ENCODE measurements at regions of chr7 and their contacts with region 1.

Region 1: GRCh38 chr7:128425850-128426249 is 16.1 kb upstream of the IMPDH1 start:
- DNase-seq: peak; percentile 88 to 94 (median 92)
- ATAC-seq: peak; percentile 88
- H3K4me3 ChIP-seq: no peak overlapping the region
- H3K27ac ChIP-seq: no peak overlapping the region
- H3K4me1 ChIP-seq: peaks cover 5 to 9% of the 10 kb centered on the region in 2 experiments; a peak in 3 of 5 replicates
- H3K27me3 ChIP-seq: peaks cover 4 to 12% of the 10 kb centered on the region in 2 experiments; a peak in 2 of 5 replicates
- CTCF ChIP-seq: peak; percentile 96 to 99 (median 99)
- EP300 ChIP-seq: no peak
- POLR2A ChIP-seq: no peak
- RAD21 ChIP-seq: peak; percentile 99

Region 2: GRCh38 chr7:128398016-128398840 is 27.6 kb before region 1 on chr7:
- CTCF ChIA-PET with region 1: interaction called, 134 read pairs
- POLR2A ChIA-PET with region 1: interaction called, 5 read pairs
- in situ Hi-C with region 1: no loop called
- intact Hi-C with region 1: loop called (anchors 1 kb)
- DNase-seq: peak; percentile 73 to 79 (median 75)
- ATAC-seq: peak; percentile 86
- H3K4me3 ChIP-seq: no peak overlapping the region
- H3K27ac ChIP-seq: no peak overlapping the region
- H3K4me1 ChIP-seq: peaks cover 0 to 12% of the 10 kb centered on the region in 2 experiments; a peak in 2 of 5 replicates
- H3K27me3 ChIP-seq: no peaks in the 10 kb centered on the region
- CTCF ChIP-seq: peak; percentile 95 to 99 (median 98)
- EP300 ChIP-seq: 0 out of 2 replicates have a peak, but pooled peaks have one; percentile 13
- POLR2A ChIP-seq: 0 out of 2 replicates have a peak, but pooled peaks have one; percentile 19
- RAD21 ChIP-seq: peak; percentile 93 to 98

Region 3: GRCh38 chr7:128415217-128415785 is 10.5 kb before region 1 on chr7:
- CTCF ChIA-PET with region 1: interaction called, 3 read pairs
- POLR2A ChIA-PET with region 1: interaction called, 10 read pairs
- in situ Hi-C with region 1: no loop called
- intact Hi-C with region 1: no loop called
- DNase-seq: no peak
- ATAC-seq: no peak
- H3K4me3 ChIP-seq: no peak overlapping the region
- H3K27ac ChIP-seq: no peak overlapping the region
- H3K4me1 ChIP-seq: peaks cover 4 to 5% of the 10 kb centered on the region in 2 experiments; a peak in 3 of 5 replicates
- H3K27me3 ChIP-seq: peaks cover 10 to 18% of the 10 kb centered on the region in 2 experiments; a peak in 4 of 5 replicates
- CTCF ChIP-seq: no peak
- EP300 ChIP-seq: no peak
- POLR2A ChIP-seq: no peak
- RAD21 ChIP-seq: no peak

Region 4: DNA sequence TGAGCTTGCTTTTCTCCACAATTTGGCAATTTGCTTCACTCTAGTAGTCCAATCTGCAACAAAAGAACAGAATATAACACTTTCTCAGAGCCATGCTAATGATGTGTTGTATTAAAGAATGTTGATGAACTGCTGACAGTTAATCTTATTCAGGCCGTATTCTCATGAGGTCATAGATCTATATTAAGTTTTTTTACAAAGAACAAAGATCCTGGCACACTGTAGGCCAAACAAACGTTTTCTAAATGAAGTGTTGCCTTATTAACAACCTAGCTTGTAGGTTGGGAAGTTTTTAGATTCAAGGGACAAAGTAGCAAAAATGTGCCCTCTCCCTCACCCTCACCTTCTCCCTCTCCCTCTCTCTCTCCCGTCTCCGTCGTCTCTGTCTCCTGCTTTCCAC is 36.6 kb after region 1 on chr7:
- CTCF ChIA-PET with region 1: interaction called, 173 read pairs
- POLR2A ChIA-PET with region 1: interaction called, 5 read pairs
- in situ Hi-C with region 1: loop called (anchors 5 kb)
- intact Hi-C with region 1: loop called (anchors 1 kb)
- DNase-seq: no peak
- ATAC-seq: no peak
- H3K4me3 ChIP-seq: no peak overlapping the region
- H3K27ac ChIP-seq: no peak overlapping the region
- H3K4me1 ChIP-seq: peaks cover 11 to 12% of the 10 kb centered on the region in 2 experiments; a peak in 4 of 5 replicates
- H3K27me3 ChIP-seq: no peaks in the 10 kb centered on the region
- CTCF ChIP-seq: no peak
- EP300 ChIP-seq: no peak
- POLR2A ChIP-seq: no peak
- RAD21 ChIP-seq: no peak

Region 5: GRCh38 chr7:128550920-128551319 is 125.1 kb after region 1 on chr7:
- CTCF ChIA-PET with region 1: no interaction called
- POLR2A ChIA-PET with region 1: no interaction called
- in situ Hi-C with region 1: no loop called
- intact Hi-C with region 1: no loop called
- DNase-seq: no peak
- ATAC-seq: peak; percentile 13; the same call in 2 of the 3 replicates
- H3K4me3 ChIP-seq: no peak overlapping the region
- H3K27ac ChIP-seq: no peak overlapping the region
- H3K4me1 ChIP-seq: no peaks in the 10 kb centered on the region
- H3K27me3 ChIP-seq: no peaks in the 10 kb centered on the region
- CTCF ChIP-seq: no peak
- EP300 ChIP-seq: no peak
- POLR2A ChIP-seq: no peak
- RAD21 ChIP-seq: no peak

Region 6: DNA sequence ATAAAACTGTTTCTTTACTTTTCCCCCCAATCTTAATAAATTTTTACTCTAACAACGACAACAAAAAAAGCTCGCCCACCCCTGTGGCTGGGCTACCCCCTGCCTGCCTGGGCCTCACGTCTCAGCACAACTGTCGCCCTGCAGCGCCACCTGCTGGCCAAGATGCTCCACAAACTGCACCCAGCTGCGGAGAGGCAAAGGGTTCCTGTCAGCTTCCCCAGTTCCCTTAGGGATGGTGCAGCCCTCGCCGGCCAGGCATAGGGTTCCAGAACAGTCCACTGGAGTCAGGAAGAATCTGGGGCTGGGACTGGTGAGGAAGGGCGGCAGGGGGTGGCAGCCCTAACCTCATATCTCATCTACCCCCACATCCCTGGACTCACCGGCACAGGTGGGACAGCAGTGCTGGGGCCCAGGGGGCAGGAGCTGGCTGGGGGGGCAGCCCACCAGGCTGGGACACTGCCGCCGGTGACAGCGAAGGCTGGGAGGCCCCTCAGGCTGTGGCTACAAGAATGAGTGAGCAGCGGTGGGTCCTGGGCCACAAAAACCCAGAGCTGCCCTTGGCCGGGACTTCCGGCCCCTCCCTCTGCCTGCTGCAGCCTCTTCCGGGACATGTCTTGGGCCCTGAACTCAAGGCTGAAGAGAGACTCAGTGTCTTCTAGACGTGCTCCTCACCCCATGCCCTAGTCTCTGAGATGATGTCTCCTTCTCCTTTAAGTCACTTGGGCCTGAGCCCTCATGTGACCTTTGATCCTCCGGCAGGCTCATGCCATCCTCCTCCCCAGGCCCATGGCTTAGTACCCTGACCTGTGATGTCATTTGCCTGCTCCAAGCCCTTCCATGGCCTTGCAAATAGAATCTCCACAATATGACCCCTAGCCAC is 458.0 kb after region 1 on chr7:
- CTCF ChIA-PET with region 1: interaction called, 50 read pairs
- POLR2A ChIA-PET with region 1: interaction called, 3 read pairs
- in situ Hi-C with region 1: no loop called
- intact Hi-C with region 1: loop called (anchors 1 kb)
- DNase-seq: peak; percentile 92 to 97 (median 96)
- ATAC-seq: peak; percentile 79
- H3K4me3 ChIP-seq: no peak overlapping the region
- H3K27ac ChIP-seq: no peak overlapping the region
- H3K4me1 ChIP-seq: peaks cover 0 to 54% of the 10 kb centered on the region in 2 experiments; a peak in 3 of 5 replicates
- H3K27me3 ChIP-seq: peaks cover 2 to 19% of the 10 kb centered on the region in 2 experiments; a peak in 4 of 5 replicates
- CTCF ChIP-seq: peak; percentile 97 to 99 (median 97)
- EP300 ChIP-seq: no peak
- POLR2A ChIP-seq: no peak
- RAD21 ChIP-seq: peak; percentile 88 to 93